Natural killer cell (primary cell): ENCODE measurements at regions of chr17 and their contacts with region 1.

Region 1: DNA sequence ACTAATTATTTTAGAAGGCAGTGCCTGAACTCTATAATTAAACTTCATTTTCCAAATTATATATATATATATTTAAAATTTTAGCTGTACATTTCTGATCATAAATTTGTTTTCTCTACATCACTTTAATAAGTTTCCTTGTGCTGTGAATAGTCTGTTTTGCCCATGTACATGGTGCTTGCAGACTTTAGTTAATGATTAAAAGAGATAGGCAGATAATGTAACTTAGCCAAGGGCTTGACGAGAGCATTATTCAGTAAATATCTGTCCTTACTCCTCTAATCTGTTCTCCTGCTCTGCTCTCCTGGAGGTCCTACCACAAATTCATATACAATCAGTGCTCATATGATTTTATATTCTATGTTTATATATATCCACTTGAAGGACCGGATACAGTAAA is 595.2 kb upstream of the KIF2B start:
- DNase-seq: no peak
- ATAC-seq: no peak
- H3K4me3 ChIP-seq: no peak overlapping the region
- H3K4me3 Mint-ChIP-seq: no peak overlapping the region
- H3K27ac ChIP-seq: no peak overlapping the region
- H3K27ac Mint-ChIP-seq: no peak overlapping the region
- H3K4me1 ChIP-seq: no peaks in the 10 kb centered on the region
- H3K4me1 Mint-ChIP-seq: no peaks in the 10 kb centered on the region
- H3K27me3 ChIP-seq: no peaks in the 10 kb centered on the region
- H3K27me3 Mint-ChIP-seq: no peaks in the 10 kb centered on the region
- CTCF ChIP-seq: no peak

Region 2: GRCh38 chr17:53166731-53167130 is 60.8 kb before region 1 on chr17:
- intact Hi-C with region 1: loop called (anchors 10 kb)
- DNase-seq: no peak
- ATAC-seq: no peak
- H3K4me3 ChIP-seq: no peak overlapping the region
- H3K4me3 Mint-ChIP-seq: no peak overlapping the region
- H3K27ac ChIP-seq: no peak overlapping the region
- H3K27ac Mint-ChIP-seq: no peak overlapping the region
- H3K4me1 ChIP-seq: no peaks in the 10 kb centered on the region
- H3K4me1 Mint-ChIP-seq: no peaks in the 10 kb centered on the region
- H3K27me3 ChIP-seq: no peaks in the 10 kb centered on the region
- H3K27me3 Mint-ChIP-seq: no peaks in the 10 kb centered on the region
- CTCF ChIP-seq: no peak